A673 (cell line): ENCODE measurements at regions of chr10 and their contacts with region 1.

Region 1: DNA sequence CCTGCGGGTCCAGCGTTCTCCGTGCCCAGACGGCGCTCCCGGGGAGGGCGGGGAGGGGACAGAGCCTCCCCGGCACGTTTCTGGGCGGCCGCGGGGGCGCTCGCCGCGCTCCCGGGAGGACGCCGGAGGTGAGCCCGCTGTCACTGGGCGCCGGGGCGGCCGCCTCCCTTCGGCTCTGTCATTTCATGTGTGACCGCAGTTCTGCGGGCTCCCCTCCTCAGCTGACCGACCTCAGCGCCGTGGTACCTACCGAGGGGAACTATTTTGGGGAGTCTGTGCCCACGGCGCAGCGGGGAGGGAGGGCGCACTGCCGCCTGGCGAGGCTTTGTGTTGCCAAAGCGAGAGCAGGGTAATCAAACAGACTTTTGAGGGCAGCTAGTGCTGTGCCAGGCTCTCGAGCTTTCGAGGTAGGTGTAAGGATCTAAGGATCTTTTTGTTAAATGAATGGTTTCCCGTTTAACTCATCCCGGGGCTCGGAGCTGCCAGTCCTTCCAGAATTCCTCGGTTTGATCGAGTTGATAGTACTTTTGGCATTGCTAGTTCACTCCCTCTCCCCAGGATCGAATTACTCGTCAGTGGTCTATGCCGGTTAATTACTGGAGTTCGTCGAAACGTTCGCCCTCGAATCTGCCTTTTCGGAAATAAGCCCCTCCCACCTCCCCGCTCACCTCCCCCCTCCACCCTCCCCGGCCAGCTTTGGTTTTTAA is 1.9 kb downstream of the ARID5B start:
- DNase-seq: peak; percentile 79
- H3K4me3 ChIP-seq: peak overlapping the region; percentile 68
- H3K27ac ChIP-seq: peak overlapping the region; percentile 85
- H3K4me1 ChIP-seq: peaks cover 43% of the 10 kb centered on the region
- H3K27me3 ChIP-seq: no peaks in the 10 kb centered on the region
- CTCF ChIP-seq: 0 out of 2 replicates have a peak, but pooled peaks have one; percentile 36

Region 2: DNA sequence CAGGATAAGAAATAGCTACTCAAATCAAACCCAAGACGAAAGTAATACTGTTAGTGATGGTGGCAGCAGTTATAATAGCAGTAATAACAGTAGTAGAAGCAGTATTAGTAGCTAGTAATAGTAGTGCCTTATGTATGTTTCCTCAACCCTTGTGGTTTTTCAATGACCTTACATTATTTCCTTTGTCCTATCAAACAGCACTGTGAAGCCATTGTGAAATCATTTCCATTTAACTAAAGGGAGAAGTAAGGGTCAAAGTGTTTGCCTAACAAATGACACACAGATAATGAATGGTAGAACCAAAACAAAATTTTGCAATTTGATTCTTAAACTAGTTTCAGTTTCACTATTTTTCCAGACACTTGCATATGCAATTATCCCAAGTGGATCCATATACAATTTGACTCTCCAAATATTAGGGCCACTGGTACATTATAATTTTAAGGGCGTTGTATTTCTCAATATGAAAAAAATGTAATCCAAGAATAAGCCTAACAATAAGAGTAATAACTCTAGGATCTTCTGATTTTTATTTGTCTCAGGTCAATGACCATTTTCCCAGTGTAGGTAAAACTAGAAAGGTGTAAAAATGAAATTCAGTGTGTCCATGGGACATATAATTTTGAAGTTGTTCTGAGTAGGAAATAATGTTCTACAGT is 416.5 kb before region 1 on chr10:
- CTCF ChIA-PET with region 1: interaction called, 10 read pairs
- POLR2A ChIA-PET with region 1: no interaction called
- intact Hi-C with region 1: no loop called
- DNase-seq: no peak
- H3K4me3 ChIP-seq: no peak overlapping the region
- H3K27ac ChIP-seq: no peak overlapping the region
- H3K4me1 ChIP-seq: peaks cover 10% of the 10 kb centered on the region
- H3K27me3 ChIP-seq: no peaks in the 10 kb centered on the region
- CTCF ChIP-seq: no peak

Region 3: GRCh38 chr10:61835069-61835945 is 68.1 kb before region 1 on chr10:
- CTCF ChIA-PET with region 1: interaction called, 3 read pairs
- POLR2A ChIA-PET with region 1: interaction called, 3 read pairs
- intact Hi-C with region 1: loop called (anchors 2 kb)
- DNase-seq: peak; percentile 80
- H3K4me3 ChIP-seq: peak overlapping the region; percentile 0
- H3K27ac ChIP-seq: peak overlapping the region; percentile 77
- H3K4me1 ChIP-seq: peaks cover 39% of the 10 kb centered on the region
- H3K27me3 ChIP-seq: no peaks in the 10 kb centered on the region
- CTCF ChIP-seq: peak; percentile 57

Region 4: DNA sequence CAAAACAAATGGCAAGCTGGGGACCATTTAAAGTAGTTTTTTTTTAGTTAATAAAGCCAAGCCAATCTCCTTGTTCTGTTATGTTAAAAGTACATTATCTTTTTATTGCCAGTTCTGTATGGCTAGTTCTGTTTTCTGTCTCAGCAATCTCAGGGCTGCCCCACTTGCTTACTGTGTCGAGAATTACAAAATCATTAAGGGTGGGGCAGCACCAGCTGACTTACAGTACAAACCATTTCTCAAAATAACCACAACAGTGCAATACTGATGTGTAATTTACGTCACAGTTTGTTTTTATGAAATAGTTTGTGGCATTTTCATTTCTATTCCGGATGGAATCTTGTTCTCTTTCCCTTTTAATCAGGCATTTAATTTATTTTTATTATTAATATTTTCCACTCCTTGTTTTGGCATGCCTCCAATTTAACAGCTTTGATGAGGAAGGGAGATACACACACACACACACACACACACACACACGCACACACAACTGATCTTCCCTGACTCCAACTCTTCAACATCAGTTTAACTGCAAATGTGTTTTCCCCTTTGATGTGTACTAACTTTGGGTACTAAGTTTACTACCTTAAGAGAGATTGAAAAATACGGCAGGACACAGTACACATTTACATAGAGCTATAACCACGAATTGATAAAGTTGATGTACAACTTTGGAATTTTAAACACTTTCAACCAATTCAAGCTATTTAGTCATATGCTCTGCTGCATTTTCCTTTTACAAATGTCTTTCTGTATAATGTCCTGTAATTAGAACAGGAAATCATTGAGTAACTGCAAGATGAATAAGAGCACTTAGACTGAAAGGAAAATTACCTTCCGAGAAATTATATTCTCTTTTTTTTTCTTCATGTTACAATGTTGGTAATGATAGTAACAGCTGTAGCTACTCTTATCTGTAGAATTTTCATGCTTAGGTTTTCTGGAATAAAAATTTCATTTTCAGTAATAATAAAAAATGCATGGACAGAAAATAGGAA is 89.6 kb after region 1 on chr10:
- CTCF ChIA-PET with region 1: no interaction called
- POLR2A ChIA-PET with region 1: interaction called, 5 read pairs
- intact Hi-C with region 1: loop called (anchors 1 kb)
- DNase-seq: peak; percentile 94
- H3K4me3 ChIP-seq: peak overlapping the region; percentile 40
- H3K27ac ChIP-seq: peak overlapping the region; percentile 84
- H3K4me1 ChIP-seq: peaks cover 54% of the 10 kb centered on the region
- H3K27me3 ChIP-seq: no peaks in the 10 kb centered on the region
- CTCF ChIP-seq: no peak

Region 5: DNA sequence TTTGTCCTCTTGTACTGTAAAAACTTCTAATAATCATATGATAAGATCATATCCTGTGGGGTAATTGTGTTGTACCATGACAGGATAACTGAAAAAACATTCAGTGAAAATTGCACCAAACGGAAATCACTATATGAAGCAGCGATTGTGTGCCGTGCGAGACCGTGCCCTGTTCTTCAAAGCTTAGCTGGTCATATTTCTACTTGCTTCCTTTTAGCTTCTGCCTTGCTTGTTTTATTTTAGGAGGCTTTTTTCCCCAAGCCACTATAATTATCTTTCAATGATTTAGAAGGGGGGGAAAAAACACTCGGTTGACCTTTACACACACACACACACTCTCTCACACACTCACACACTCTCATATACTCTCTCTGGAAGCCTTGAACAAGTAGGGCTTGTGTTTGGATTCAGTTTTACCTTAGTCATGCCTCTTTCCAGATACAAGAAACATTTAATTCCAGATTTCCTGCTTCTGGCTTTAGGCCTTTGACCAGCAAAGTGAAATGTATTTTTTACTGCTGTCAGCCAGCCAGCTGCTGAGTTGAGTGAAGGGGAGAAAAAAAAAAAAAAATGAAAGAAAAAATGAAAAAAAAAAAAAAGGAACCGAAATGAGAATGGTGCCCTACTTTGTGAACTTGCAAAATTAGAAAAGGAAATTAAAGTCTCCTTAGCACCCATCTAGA is 179.5 kb after region 1 on chr10:
- CTCF ChIA-PET with region 1: no interaction called
- POLR2A ChIA-PET with region 1: no interaction called
- intact Hi-C with region 1: loop called (anchors 2 kb)
- DNase-seq: peak; percentile 80
- H3K4me3 ChIP-seq: peak overlapping the region; percentile 17
- H3K27ac ChIP-seq: peak overlapping the region; percentile 95
- H3K4me1 ChIP-seq: peaks cover 57% of the 10 kb centered on the region
- H3K27me3 ChIP-seq: no peaks in the 10 kb centered on the region
- CTCF ChIP-seq: no peak

Region 6: DNA sequence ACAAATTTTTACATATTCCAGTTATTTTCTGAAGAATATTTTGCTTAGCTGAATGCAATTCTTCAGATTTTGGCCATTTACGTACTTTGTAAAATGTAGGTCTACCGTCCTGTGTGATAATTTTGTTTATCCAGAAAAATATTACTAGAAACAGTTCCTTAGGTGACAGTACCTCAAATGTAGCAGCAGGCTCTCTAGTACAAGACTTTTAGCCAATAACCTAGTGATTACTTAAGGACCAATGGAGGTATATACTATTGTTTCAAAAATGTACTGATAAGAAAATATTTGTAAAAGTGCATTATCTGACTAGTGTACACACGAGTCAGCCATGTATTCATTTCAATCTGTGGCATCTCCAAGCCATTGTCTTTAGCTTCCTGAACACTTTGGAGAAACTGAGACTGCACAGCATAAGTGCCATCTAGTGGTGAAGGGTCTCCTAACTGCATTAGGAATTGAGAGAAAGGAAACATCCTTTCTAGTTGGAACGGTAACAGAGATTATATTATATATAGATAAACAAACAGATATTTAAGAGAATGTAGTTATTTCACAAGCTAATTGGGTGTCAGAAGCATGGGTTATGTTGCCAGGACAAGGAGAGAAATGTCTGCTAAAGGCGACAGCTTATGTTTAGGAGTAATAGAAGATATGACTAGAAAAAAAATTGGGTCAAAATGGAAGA is 341.6 kb after region 1 on chr10:
- CTCF ChIA-PET with region 1: interaction called, 5 read pairs
- POLR2A ChIA-PET with region 1: no interaction called
- intact Hi-C with region 1: loop called (anchors 2 kb)
- DNase-seq: peak; percentile 91
- H3K4me3 ChIP-seq: peak overlapping the region; percentile 29
- H3K27ac ChIP-seq: peak overlapping the region; percentile 68
- H3K4me1 ChIP-seq: peaks cover 78% of the 10 kb centered on the region
- H3K27me3 ChIP-seq: no peaks in the 10 kb centered on the region
- CTCF ChIP-seq: peak; percentile 93